Activated T-helper 2 cell treated with anti-CD3 and anti-CD28 coated beads, Interferon-gamma antibody, Interleukin-2, Interleukin-4, amounts not matched to agents 10 μg/mL and 5 μg/mL and 100 μg/mL, durations not matched to agents 14 hours and 24 hours and 36 hours (primary cell): ENCODE measurements at regions of chr1 and their contacts with region 1.

Region 1: GRCh38 chr1:244864253-244865027 is at the start of gene HNRNPU:
- DNase-seq: peak; percentile 95
- H3K4me3 Mint-ChIP-seq: peak within 1 kb of the TSS; percentile 88
- H3K27ac Mint-ChIP-seq: peak within 1 kb of the TSS; percentile 94
- H3K4me1 Mint-ChIP-seq: peaks cover 37% of the 10 kb centered on the region
- H3K27me3 Mint-ChIP-seq: no peaks in the 10 kb centered on the region
- total RNA-seq, gene HNRNPU: 569 and 589 TPM in 2 replicates

Region 2: DNA sequence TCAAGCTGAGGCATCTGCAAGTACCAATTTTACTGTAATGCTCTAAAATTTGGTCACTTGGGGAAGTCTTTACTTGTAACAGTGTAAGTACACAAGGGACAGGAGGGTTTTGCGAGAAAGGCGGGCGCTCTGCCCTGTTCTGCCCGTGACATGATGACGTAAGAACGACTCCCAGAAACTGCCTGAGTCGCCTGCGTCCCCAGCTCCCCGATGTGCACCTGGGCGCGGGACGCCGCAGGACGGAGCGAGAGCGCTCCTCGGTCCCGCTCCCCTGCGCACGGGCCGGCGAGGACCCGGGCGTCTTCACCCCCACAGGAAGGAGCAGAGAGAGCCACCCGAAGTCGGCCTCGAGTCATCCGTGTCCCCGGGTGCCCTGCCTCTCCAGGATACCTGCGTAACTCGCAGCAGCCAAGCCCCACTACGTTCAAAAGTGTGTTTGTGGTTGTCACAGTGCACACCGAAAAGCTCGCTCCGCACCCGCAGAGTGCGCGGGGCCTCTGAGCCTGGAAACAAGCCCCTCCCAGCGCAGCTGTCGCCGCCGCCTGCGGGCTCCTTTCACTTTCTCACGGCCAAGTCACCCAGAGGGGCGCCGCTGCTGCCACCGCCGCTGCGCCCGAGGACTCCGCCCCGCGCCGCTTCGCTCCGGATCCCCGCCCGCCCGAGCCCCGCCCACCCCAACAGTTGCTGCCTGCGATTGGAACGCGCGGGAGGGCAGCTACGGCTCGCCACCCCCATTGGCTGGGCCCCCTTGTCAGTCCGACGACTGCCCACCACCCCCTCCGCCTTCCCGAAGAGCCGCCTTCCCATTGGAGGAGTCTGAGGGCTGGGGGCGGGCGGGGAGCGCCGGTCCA is 816.6 kb before region 1 on chr1:
- intact Hi-C with region 1: loop called (anchors 5 kb)
- DNase-seq: peak; percentile 94
- H3K4me3 Mint-ChIP-seq: peak overlapping the region; percentile 95
- H3K27ac Mint-ChIP-seq: peak overlapping the region; percentile 91
- H3K4me1 Mint-ChIP-seq: peaks cover 25% of the 10 kb centered on the region
- H3K27me3 Mint-ChIP-seq: peaks cover 53% of the 10 kb centered on the region

Region 3: GRCh38 chr1:244451951-244452795 is 412.3 kb before region 1 on chr1:
- intact Hi-C with region 1: loop called (anchors 2 kb)
- DNase-seq: peak; percentile 98
- H3K4me3 Mint-ChIP-seq: peak overlapping the region; percentile 95
- H3K27ac Mint-ChIP-seq: peak overlapping the region; percentile 96
- H3K4me1 Mint-ChIP-seq: peaks cover 34% of the 10 kb centered on the region
- H3K27me3 Mint-ChIP-seq: no peaks in the 10 kb centered on the region

Region 4: GRCh38 chr1:244652699-244653466 is 211.6 kb before region 1 on chr1 and contains the start of gene DESI2:
- intact Hi-C with region 1: loop called (anchors 1 kb)
- DNase-seq: peak; percentile 98
- H3K4me3 Mint-ChIP-seq: peak within 1 kb of the TSS; percentile 82
- H3K27ac Mint-ChIP-seq: peak within 1 kb of the TSS; percentile 71
- H3K4me1 Mint-ChIP-seq: peaks cover 20% of the 10 kb centered on the region
- H3K27me3 Mint-ChIP-seq: peaks cover 1% of the 10 kb centered on the region
- total RNA-seq, gene DESI2: 27.4 TPM in 2 replicates

Region 5: GRCh38 chr1:244970661-244971551 is 106.5 kb after region 1 on chr1:
- intact Hi-C with region 1: loop called (anchors 1 kb)
- DNase-seq: peak; percentile 88
- H3K4me3 Mint-ChIP-seq: peak overlapping the region; percentile 91
- H3K27ac Mint-ChIP-seq: peak overlapping the region; percentile 98
- H3K4me1 Mint-ChIP-seq: peaks cover 13% of the 10 kb centered on the region
- H3K27me3 Mint-ChIP-seq: peaks cover 4% of the 10 kb centered on the region

Region 6: DNA sequence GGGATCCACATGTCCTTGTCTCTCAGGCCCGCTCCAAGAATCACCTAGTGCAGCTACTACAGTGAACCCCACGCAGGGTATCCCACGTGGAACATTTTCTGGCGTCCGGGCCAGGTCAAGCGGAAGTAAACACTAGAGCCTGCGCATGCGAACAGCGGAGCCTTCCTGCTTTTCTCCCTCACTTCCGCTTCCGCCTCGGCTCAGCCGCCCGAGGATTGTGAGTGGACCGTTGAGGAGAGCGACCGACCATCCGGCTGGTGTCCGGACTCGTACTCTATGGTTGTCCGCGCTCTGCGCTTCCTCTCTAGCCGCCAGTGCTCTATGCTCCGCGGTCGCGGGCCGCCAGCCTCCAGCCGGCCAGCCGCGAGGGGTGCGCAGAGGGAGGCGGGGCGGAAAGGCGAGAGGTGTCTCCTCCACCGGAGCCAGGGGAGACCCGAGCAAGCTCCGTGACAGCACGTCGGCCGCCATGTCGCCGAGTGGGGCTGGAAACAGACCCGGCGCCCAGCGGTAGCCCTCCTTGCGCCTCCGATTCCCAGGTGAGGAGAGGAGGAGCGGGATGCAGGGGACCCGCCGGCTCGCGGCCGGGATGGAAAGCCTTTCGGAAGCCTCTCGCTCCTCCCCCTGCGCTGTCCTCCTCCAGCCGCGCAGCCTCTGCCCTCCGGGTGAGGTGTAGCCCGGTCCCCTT is 1701.8 kb after region 1 on chr1 and contains the starts of genes CNST and TFB2M:
- intact Hi-C with region 1: loop called (anchors 10 kb)
- DNase-seq: peak; percentile 93
- H3K4me3 Mint-ChIP-seq: peak within 1 kb of the TSS; percentile 99
- H3K27ac Mint-ChIP-seq: peak within 1 kb of the TSS; percentile 98
- H3K4me1 Mint-ChIP-seq: peaks cover 35% of the 10 kb centered on the region
- H3K27me3 Mint-ChIP-seq: no peaks in the 10 kb centered on the region
- total RNA-seq, gene CNST: 18.8 and 21.6 TPM in 2 replicates
- total RNA-seq, gene TFB2M: 21.0 and 21.7 TPM in 2 replicates